BJ (cell line): ENCODE measurements at regions of chr1 and their contacts with region 1.

Region 1: DNA sequence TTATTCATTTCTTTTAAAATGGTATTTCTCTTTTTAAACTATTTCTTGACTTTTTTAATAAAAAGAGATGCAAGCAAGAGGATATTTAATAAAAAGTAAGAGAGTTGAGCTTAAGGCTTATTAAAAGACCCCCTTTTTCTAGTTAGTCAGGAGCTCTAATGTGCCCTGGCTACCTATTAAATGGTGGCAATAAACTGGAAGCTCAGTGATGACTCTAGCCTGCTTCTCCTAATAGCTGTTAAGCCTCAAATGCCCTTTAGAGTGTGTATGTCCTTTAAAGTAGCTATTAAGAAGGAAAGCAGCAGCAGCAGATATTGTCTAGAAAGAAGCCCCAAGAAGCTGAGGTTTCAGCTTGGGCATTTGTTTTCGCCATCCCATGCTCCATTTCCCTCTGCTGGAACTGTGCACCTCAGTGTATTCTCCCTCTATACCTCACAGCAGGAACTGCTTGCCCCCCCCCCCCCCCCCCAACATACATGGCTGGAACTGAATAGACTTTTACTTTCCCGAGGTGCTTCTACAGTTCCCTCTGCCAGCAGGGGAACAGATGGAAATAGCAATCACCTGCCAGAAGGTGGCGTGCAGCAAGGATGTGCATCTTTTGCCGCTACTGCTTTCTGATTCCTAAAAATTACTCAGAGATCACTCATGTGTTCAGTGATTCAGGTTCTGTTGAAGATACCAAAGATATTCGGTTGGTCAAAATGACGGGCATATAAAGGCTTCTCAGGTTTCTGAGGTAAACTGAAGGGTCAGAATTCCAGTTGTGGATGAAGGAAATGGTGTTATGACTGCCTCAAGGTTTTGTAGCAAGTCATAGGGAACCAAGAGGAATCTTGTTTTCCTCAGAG is 2.5 kb downstream of the RGS4 start:
- DNase-seq: peak; percentile 31
- H3K4me3 ChIP-seq: peak overlapping the region; percentile 35
- H3K27me3 ChIP-seq: no peaks in the 10 kb centered on the region
- CTCF ChIP-seq: peak; percentile 81

Region 2: DNA sequence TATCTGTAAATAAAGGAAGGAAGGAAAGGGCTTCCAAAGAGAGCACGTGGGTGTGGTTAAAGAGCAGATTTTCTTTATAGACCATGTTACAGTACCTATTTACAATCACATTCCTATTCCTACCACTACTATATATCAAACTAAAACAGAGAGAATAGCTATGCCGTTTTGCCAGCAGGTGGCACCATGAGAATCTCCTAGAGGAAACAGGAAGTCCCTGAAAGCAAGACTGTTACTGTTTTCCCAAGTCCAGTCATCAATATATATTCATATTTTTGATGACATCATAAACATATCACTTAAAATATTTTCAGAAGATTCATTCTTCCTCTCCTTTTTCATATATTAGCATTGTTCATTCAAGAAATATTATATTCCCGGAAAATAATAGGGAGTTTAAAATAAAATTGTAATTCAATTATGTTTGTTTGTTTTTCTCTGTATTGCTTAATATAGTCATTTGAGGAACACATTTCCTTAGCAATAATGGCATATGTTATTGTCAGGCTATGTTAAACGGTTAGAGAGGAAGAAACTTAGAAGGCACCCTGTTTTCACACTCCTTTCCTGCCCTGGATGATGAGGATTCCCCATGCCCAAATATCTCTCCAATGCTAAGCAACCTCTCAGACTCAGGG is 217.3 kb before region 1 on chr1:
- CTCF ChIA-PET with region 1: interaction called, 47 read pairs
- POLR2A ChIA-PET with region 1: no interaction called
- DNase-seq: peak; percentile 19
- H3K4me3 ChIP-seq: no peak overlapping the region
- H3K27me3 ChIP-seq: no peaks in the 10 kb centered on the region
- CTCF ChIP-seq: peak; percentile 77

Region 3: DNA sequence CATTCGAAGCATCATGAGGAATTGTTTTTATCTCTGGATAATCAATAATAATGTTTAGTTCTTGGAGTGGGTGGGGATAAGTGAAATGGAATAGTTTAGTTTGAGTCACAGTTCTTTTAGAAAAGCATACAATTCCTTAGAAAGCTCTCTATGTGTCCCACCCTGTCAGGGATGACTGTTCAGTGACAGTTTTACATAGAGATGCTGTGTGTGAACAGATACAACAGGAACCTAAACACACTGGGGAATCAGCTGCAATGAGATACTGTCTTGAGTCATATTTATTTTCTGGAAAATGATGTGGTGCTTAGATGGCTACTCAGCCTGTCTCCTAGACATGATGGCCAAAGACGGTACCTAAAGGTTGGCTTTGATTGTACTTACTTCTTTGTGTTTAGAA is 184.9 kb before region 1 on chr1:
- CTCF ChIA-PET with region 1: interaction called, 25 read pairs
- POLR2A ChIA-PET with region 1: no interaction called
- DNase-seq: no peak
- H3K4me3 ChIP-seq: no peak overlapping the region
- H3K27me3 ChIP-seq: no peaks in the 10 kb centered on the region
- CTCF ChIP-seq: no peak

Region 4: DNA sequence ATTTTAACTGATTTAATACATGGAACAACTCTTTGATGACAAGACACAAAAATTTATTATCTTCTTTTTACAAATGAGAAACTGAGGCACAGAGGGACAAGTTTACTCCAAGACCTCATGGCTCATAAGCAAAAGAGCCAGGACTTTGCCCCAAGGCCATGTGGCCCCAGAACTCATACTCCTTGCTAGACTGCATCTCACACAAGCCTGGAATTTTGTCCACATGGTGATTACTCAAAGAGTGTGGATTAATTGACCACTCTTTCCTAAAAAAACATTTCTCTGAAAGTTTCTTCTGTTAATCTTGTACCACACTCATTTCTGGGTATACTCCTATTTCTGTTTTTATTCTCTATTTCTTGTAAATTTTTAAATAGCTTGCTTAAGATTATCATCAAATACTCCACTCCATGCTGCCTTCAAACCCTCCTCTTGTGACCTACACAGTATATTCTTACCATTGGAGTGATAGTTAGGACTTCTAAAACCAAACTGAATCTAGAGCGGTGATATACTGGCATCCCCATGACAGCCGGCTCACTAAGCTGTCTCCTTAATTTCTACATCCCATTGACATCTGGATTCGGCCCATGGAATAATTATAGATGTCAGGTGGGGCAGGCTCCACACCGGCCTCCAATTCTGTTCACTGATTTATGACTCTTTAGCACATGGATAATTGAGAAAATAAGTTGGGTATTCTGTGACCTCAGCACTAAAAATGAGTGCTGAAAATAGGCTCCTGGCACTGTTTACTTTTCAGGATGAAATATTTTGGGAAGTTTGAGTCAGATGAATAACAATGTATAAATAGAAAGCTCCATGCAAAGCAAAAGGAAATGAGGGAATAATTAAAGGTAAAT is 13.6 kb after region 1 on chr1:
- CTCF ChIA-PET with region 1: interaction called, 18 read pairs
- POLR2A ChIA-PET with region 1: no interaction called
- DNase-seq: peak; percentile 46
- H3K4me3 ChIP-seq: no peak overlapping the region
- H3K27me3 ChIP-seq: no peaks in the 10 kb centered on the region
- CTCF ChIP-seq: no peak

Region 5: GRCh38 chr1:163315773-163316374 is 244.2 kb after region 1 on chr1:
- CTCF ChIA-PET with region 1: interaction called, 55 read pairs
- POLR2A ChIA-PET with region 1: no interaction called
- DNase-seq: no peak
- H3K4me3 ChIP-seq: no peak overlapping the region
- H3K27me3 ChIP-seq: no peaks in the 10 kb centered on the region
- CTCF ChIP-seq: peak; percentile 47; the same call in 1 of the 2 replicates